Activated CD8-positive, alpha-beta memory T cell treated with anti-CD3 and anti-CD28 coated beads, Interleukin-2, amount 10 ng/mL, durations not matched to agents 7 days and 5 days (primary cell): ENCODE measurements at regions of chr1 and their contacts with region 1.

Region 1: DNA sequence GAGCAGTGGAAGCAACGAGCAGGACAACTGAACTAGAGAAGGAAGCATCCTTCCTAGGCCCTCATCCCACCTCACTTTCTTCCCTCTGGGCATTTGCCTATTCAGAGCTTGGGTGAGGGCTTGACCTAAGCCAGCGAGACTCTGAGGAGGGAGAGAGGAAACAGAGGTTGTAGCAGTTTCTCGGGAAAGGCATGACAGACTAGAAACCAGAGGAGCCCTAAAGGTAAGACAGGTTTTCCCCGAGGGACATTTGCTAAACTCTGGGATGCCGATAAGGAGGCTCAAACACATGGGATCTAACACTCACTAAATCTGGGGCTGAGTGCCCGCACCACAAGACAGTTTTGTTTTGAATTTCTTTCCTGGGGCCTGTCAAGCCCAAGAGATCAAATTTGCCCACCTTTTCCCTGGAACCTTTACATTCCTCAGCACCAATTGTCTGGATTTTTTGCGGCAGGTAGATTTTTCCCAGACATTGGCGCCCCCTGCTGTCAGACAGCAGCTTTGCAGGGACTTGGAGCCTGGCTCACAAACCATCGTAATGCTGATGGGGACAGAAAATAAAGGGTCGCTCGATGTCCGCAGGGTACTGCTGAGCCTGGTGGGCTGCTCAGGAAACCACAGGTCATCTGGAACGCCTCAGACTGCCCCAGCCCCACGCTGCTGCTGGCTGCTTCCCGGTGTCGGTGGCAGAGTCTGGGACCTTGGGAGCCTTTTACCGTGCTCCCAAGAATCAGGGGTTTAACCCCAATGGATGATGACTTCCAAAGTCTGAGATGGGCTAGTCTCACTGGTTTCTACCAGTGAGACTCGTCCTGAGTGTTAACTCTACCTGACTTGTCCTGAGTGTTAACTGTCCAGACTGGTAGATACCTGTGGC is 23.4 kb upstream of the TSPAN2 start:
- DNase-seq: peak; percentile 54
- ATAC-seq: peak; percentile 47
- H3K4me3 Mint-ChIP-seq: no peak overlapping the region
- H3K27ac Mint-ChIP-seq: no peak overlapping the region
- H3K4me1 Mint-ChIP-seq: no peaks in the 10 kb centered on the region
- H3K27me3 Mint-ChIP-seq: no peaks in the 10 kb centered on the region

Region 2: GRCh38 chr1:114660224-114660623 is 452.5 kb before region 1 on chr1:
- CTCF ChIA-PET with region 1: no interaction called
- DNase-seq: no peak
- ATAC-seq: no peak
- H3K4me3 Mint-ChIP-seq: no peak overlapping the region
- H3K27ac Mint-ChIP-seq: no peak overlapping the region
- H3K4me1 Mint-ChIP-seq: no peaks in the 10 kb centered on the region
- H3K27me3 Mint-ChIP-seq: peaks cover 27% of the 10 kb centered on the region

Region 3: GRCh38 chr1:114979278-114979891 is 133.4 kb before region 1 on chr1:
- CTCF ChIA-PET with region 1: interaction called, 27 read pairs
- DNase-seq: peak; percentile 71
- ATAC-seq: no peak
- H3K4me3 Mint-ChIP-seq: no peak overlapping the region
- H3K27ac Mint-ChIP-seq: no peak overlapping the region
- H3K4me1 Mint-ChIP-seq: no peaks in the 10 kb centered on the region
- H3K27me3 Mint-ChIP-seq: peaks cover 24% of the 10 kb centered on the region

Region 4: DNA sequence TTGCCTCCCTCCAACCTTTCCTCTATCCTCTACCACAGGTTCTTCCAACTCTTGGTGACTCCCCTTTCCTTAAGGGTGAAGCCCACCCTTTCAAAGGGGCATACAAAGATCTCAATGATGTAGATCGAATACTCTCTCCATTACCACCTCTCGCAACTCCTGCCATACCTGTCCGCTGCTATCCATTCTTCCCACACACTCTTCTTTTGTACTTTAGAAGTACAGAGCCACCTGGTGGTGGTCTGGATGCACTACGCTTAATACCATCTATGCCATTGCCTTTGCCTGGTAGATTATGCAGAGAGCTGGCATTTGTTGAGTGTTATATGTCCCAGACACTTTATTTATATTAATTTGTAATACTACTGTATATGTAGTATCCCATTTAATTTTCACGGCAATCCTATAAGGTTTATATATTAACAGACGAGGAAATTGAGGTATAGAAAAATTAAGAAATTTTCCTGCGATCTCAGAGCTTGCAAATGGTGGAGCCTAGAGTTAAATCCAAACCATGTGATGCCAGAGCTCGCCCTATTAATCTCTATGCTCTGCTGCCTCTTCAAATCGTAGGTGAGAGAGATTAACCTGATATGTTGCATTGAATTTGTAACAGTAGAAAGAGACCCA is 60.2 kb before region 1 on chr1:
- CTCF ChIA-PET with region 1: interaction called, 44 read pairs
- DNase-seq: peak; percentile 69
- ATAC-seq: peak; percentile 75
- H3K4me3 Mint-ChIP-seq: no peak overlapping the region
- H3K27ac Mint-ChIP-seq: no peak overlapping the region
- H3K4me1 Mint-ChIP-seq: peaks cover 7% of the 10 kb centered on the region
- H3K27me3 Mint-ChIP-seq: no peaks in the 10 kb centered on the region

Region 5: GRCh38 chr1:115098979-115099692 is 13.6 kb before region 1 on chr1:
- CTCF ChIA-PET with region 1: interaction called, 16 read pairs
- DNase-seq: peak; percentile 87
- ATAC-seq: peak; percentile 89
- H3K4me3 Mint-ChIP-seq: peak overlapping the region; percentile 83
- H3K27ac Mint-ChIP-seq: peak overlapping the region; percentile 99
- H3K4me1 Mint-ChIP-seq: peaks cover 25% of the 10 kb centered on the region
- H3K27me3 Mint-ChIP-seq: peaks cover 6% of the 10 kb centered on the region

Region 6: GRCh38 chr1:115123116-115123515 is 10.4 kb after region 1 on chr1:
- CTCF ChIA-PET with region 1: no interaction called
- DNase-seq: no peak
- ATAC-seq: no peak
- H3K4me3 Mint-ChIP-seq: no peak overlapping the region
- H3K27ac Mint-ChIP-seq: no peak overlapping the region
- H3K4me1 Mint-ChIP-seq: no peaks in the 10 kb centered on the region
- H3K27me3 Mint-ChIP-seq: peaks cover 20% of the 10 kb centered on the region

Region 7: DNA sequence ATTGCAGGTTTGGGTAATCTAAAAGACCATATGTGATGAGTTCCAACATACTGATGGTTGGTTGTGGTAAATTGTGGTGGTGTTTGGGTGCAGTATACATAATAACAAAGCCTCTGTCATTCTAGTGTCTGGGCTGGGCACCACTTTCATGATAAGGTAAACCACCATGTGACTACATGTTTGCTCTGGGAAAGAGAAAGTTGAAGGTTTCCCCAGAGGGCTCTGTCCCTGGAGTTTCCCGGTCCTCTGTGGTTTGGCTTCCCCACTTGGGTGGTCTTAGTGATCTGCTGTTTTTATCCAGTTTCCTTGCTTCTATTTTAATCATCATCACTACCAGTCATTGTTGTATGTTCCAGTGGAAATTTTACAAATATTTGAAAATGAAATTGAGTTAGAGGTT is 32.5 kb after region 1 on chr1:
- CTCF ChIA-PET with region 1: no interaction called
- DNase-seq: no peak
- ATAC-seq: no peak
- H3K4me3 Mint-ChIP-seq: no peak overlapping the region
- H3K27ac Mint-ChIP-seq: no peak overlapping the region
- H3K4me1 Mint-ChIP-seq: peaks cover 2% of the 10 kb centered on the region
- H3K27me3 Mint-ChIP-seq: peaks cover 45% of the 10 kb centered on the region